ENCODE measurements at regions of chr10 and their contacts with region 1.

Region 1: DNA sequence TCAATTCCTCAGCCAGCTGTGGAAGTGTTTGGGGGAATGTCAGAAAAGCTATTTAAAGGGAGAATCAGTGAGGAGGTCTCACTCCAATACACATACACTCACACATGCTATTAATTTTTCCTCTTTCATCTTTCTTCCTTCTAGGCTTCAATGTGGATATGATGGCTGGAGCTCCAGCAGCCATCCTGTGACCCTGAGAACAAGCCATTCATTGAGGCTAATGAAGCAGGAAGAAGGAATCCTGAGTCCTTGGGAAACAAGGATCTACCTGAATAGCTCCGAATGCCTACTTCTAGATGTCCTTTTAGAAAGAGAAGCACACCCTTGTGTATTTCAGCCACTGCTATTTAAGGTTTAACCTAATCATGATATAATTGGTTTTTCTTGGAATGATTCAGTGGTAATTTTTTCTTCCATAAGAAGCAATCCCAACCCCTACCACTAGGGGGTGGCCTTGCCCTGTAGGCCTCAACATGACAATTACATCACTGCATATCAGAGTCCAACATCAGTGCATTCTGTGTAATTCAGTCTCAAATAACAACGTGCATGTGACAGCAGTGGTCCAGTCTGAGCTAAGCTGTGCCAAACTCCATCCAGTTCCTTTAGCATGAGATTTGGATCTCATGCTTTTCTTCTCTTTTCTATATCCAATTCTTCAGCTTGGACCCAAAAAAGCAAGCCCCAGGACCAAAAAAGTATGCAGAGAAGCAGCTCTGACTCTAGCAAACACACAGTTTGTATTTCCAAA is 85.3 kb upstream of the ANKRD1 start:
- DNase-seq: peak; percentile 41
- ATAC-seq: no peak
- H3K4me3 ChIP-seq: no peak overlapping the region
- H3K27ac ChIP-seq: no peak overlapping the region
- H3K4me1 ChIP-seq: no peaks in the 10 kb centered on the region
- H3K27me3 ChIP-seq: no peaks in the 10 kb centered on the region
- CTCF ChIP-seq: peak; percentile 94

Region 2: DNA sequence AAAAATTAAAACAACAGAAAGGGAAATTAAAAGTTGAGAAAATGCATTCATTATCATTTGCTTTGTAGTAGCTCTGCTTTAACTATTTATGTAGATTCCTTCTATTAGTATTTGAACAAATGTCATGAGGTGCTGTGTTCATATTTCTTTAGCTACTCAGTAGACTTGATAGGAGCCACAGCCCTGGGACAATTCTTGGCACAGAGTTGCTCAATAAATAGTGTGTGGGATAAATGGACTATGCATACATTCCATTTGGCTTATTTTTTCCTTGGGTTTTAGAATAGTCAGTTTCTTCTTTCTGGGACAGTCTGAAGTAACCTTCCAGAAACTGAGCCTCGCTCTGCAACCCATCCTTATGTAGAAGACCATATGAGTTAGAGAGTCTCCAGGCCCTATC is 121.0 kb before region 1 on chr10:
- CTCF ChIA-PET with region 1: no interaction called
- POLR2A ChIA-PET with region 1: no interaction called
- in situ Hi-C with region 1: no loop called
- intact Hi-C with region 1: no loop called
- DNase-seq: no peak
- ATAC-seq: no peak
- H3K4me3 ChIP-seq: no peak overlapping the region
- H3K27ac ChIP-seq: no peak overlapping the region
- H3K4me1 ChIP-seq: no peaks in the 10 kb centered on the region
- H3K27me3 ChIP-seq: no peaks in the 10 kb centered on the region
- CTCF ChIP-seq: no peak

Region 3: GRCh38 chr10:91043173-91043910 is 37.2 kb after region 1 on chr10:
- CTCF ChIA-PET with region 1: interaction called, 12 read pairs
- POLR2A ChIA-PET with region 1: no interaction called
- in situ Hi-C with region 1: no loop called
- intact Hi-C with region 1: no loop called
- DNase-seq: no peak
- ATAC-seq: peak; percentile 87
- H3K4me3 ChIP-seq: no peak overlapping the region
- H3K27ac ChIP-seq: no peak overlapping the region
- H3K4me1 ChIP-seq: no peaks in the 10 kb centered on the region
- H3K27me3 ChIP-seq: peaks cover 2% of the 10 kb centered on the region; the same call in 1 of the 2 replicates
- CTCF ChIP-seq: peak; percentile 73